CD4-positive, alpha-beta T cell (primary cell): ENCODE measurements at regions of chr3 and their contacts with region 1.

Region 1: GRCh38 chr3:43296565-43296964 is 10.2 kb downstream of the SNRK start:
- DNase-seq: peak; percentile 32 to 90 (median 58)
- ATAC-seq: peak; percentile 91
- H3K4me3 ChIP-seq: peak overlapping the region; percentile 35
- H3K4me3 Mint-ChIP-seq: peak overlapping the region; percentile 73
- H3K27ac ChIP-seq: peak overlapping the region; percentile 59 to 68
- H3K27ac Mint-ChIP-seq: peak overlapping the region; percentile 91
- H3K4me1 ChIP-seq: peaks cover 53% of the 10 kb centered on the region
- H3K4me1 Mint-ChIP-seq: peaks cover 87% of the 10 kb centered on the region
- H3K27me3 ChIP-seq: no peaks in the 10 kb centered on the region
- H3K27me3 Mint-ChIP-seq: no peaks in the 10 kb centered on the region
- CTCF ChIP-seq: no peak

Region 2: GRCh38 chr3:43223670-43224364 is 72.7 kb before region 1 on chr3:
- CTCF ChIA-PET with region 1: interaction called, 3 read pairs
- POLR2A ChIA-PET with region 1: interaction called, 29 read pairs
- intact Hi-C with region 1: no loop called
- DNase-seq: peak in 3 of 14 experiments; percentile 49 to 56 (median 52)
- ATAC-seq: no peak
- H3K4me3 ChIP-seq: no peak overlapping the region
- H3K4me3 Mint-ChIP-seq: peak overlapping the region; percentile 2
- H3K27ac ChIP-seq: no peak overlapping the region
- H3K27ac Mint-ChIP-seq: peak overlapping the region; percentile 86
- H3K4me1 ChIP-seq: peaks cover 28% of the 10 kb centered on the region
- H3K4me1 Mint-ChIP-seq: peaks cover 60% of the 10 kb centered on the region
- H3K27me3 ChIP-seq: no peaks in the 10 kb centered on the region
- H3K27me3 Mint-ChIP-seq: no peaks in the 10 kb centered on the region
- CTCF ChIP-seq: peak; percentile 65

Region 3: DNA sequence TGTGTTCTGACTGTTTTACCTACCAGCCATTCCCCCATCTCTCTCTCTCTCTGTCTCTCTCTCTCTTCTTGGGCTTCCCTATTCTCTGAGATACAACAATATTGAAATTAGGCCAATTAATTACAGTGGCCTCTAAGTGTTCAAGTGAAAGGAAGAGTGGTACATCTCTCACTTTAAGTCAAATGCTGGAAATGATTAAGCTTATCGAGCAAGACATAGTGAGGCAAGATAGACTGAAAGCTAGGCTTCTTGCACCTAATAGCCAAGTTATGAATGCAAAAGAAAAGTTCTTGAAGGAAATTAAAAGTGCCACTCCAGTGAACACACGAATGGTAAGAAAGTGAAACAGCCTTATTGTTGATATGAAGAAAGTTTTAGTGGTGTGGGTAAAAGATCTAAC is 11.1 kb after region 1 on chr3:
- CTCF ChIA-PET with region 1: no interaction called
- POLR2A ChIA-PET with region 1: interaction called, 10 read pairs
- intact Hi-C with region 1: no loop called
- DNase-seq: no peak
- ATAC-seq: no peak
- H3K4me3 ChIP-seq: no peak overlapping the region
- H3K4me3 Mint-ChIP-seq: peak overlapping the region; percentile 39
- H3K27ac ChIP-seq: no peak overlapping the region
- H3K27ac Mint-ChIP-seq: peak overlapping the region; percentile 37
- H3K4me1 ChIP-seq: peaks cover 20% of the 10 kb centered on the region
- H3K4me1 Mint-ChIP-seq: peaks cover 96% of the 10 kb centered on the region
- H3K27me3 ChIP-seq: no peaks in the 10 kb centered on the region
- H3K27me3 Mint-ChIP-seq: no peaks in the 10 kb centered on the region
- CTCF ChIP-seq: no peak

Region 4: DNA sequence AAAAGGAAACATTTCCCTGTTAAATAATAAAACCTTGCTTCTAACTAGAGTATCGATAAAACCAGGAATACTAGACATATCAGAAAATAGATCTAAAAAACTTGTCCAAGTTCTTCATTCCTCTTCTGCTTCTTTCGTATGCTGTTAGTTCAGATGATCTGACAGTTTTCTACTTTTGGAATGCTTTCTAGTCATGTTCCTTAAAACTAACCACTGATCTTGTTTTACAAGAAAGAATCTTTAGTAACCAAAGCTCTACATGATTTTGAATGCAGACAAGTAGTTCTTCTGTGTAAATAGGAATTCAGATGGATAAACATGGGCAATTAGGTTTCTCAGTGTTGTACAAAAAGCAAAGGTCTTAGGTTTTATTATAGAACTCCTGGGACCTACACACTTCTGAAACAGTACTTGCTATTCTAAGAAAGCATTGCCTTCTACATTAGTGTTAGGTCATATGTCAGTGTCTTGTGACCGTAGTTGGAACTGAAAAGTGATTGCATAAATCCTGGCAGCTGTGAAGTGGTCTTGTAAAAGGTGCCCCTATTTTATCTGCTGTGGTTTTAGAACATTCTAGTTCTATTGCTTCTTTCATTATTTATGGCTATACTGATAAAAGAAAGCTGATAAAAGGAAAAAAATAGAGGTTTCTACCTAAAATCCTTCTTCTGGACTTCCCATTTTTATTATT is 30.5 kb after region 1 on chr3:
- CTCF ChIA-PET with region 1: interaction called, 4 read pairs
- POLR2A ChIA-PET with region 1: interaction called, 27 read pairs
- intact Hi-C with region 1: loop called in 1 of 2 experiments (anchors 5 kb)
- DNase-seq: no peak
- ATAC-seq: no peak
- H3K4me3 ChIP-seq: no peak overlapping the region
- H3K4me3 Mint-ChIP-seq: peak overlapping the region; percentile 52
- H3K27ac ChIP-seq: peak overlapping the region; percentile 4 to 9
- H3K27ac Mint-ChIP-seq: peak overlapping the region; percentile 49
- H3K4me1 ChIP-seq: peaks cover 38% of the 10 kb centered on the region
- H3K4me1 Mint-ChIP-seq: peaks cover 94% of the 10 kb centered on the region
- H3K27me3 ChIP-seq: no peaks in the 10 kb centered on the region
- H3K27me3 Mint-ChIP-seq: no peaks in the 10 kb centered on the region
- CTCF ChIP-seq: no peak

Region 5: GRCh38 chr3:43389388-43390254 is 93.1 kb after region 1 on chr3:
- CTCF ChIA-PET with region 1: interaction called, 3 read pairs
- POLR2A ChIA-PET with region 1: interaction called, 24 read pairs
- intact Hi-C with region 1: no loop called
- DNase-seq: peak; percentile 54 to 93 (median 68)
- ATAC-seq: peak; percentile 94
- H3K4me3 ChIP-seq: peak overlapping the region; percentile 1
- H3K4me3 Mint-ChIP-seq: peak overlapping the region; percentile 49
- H3K27ac ChIP-seq: peak overlapping the region; percentile 53 to 83
- H3K27ac Mint-ChIP-seq: peak overlapping the region; percentile 88
- H3K4me1 ChIP-seq: peaks cover 64% of the 10 kb centered on the region
- H3K4me1 Mint-ChIP-seq: peaks cover 83% of the 10 kb centered on the region
- H3K27me3 ChIP-seq: no peaks in the 10 kb centered on the region
- H3K27me3 Mint-ChIP-seq: no peaks in the 10 kb centered on the region
- CTCF ChIP-seq: no peak